Activated B cell treated with CpG ODN at 0.5 μM for 24 hours (primary cell): ENCODE measurements at regions of chrX and their contacts with region 1.

Region 1: GRCh38 chrX:50075630-50076339 is 125.0 kb downstream of the AKAP4 start:
- DNase-seq: no peak
- ATAC-seq: peak; percentile 40
- H3K4me3 Mint-ChIP-seq: peak overlapping the region; percentile 25
- H3K27ac Mint-ChIP-seq: peak overlapping the region; percentile 77
- H3K4me1 Mint-ChIP-seq: peaks cover 29% of the 10 kb centered on the region
- H3K27me3 Mint-ChIP-seq: no peaks in the 10 kb centered on the region
- CTCF ChIP-seq: no peak

Region 2: GRCh38 chrX:50036426-50036825 is 39.4 kb before region 1 on chrX:
- CTCF ChIA-PET with region 1: no interaction called
- POLR2A ChIA-PET with region 1: no interaction called
- intact Hi-C with region 1: no loop called
- DNase-seq: no peak
- ATAC-seq: no peak
- H3K4me3 Mint-ChIP-seq: no peak overlapping the region
- H3K27ac Mint-ChIP-seq: no peak overlapping the region
- H3K4me1 Mint-ChIP-seq: no peaks in the 10 kb centered on the region
- H3K27me3 Mint-ChIP-seq: no peaks in the 10 kb centered on the region
- CTCF ChIP-seq: no peak

Region 3: DNA sequence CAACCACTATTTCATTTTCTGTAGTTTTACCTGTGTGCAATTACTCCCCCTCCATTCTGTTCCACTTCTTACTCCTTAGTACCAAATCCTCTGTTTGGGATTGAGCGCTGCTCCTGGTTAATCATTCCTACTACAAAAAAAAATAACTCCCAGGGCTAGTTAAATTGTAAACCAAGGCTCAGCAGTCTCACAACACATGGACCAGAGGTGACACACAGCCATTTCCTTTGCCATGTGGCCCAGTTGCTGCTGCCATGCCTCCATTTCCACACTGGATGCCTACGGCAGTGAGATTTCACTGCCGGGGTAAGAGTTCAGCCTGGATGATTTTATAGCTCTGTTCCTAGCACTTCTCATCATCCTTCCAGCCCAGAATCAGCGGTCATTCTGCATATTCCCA is 17.8 kb after region 1 on chrX:
- CTCF ChIA-PET with region 1: no interaction called
- POLR2A ChIA-PET with region 1: no interaction called
- intact Hi-C with region 1: no loop called
- DNase-seq: no peak
- ATAC-seq: no peak
- H3K4me3 Mint-ChIP-seq: no peak overlapping the region
- H3K27ac Mint-ChIP-seq: no peak overlapping the region
- H3K4me1 Mint-ChIP-seq: peaks cover 6% of the 10 kb centered on the region
- H3K27me3 Mint-ChIP-seq: no peaks in the 10 kb centered on the region
- CTCF ChIP-seq: no peak

Region 4: DNA sequence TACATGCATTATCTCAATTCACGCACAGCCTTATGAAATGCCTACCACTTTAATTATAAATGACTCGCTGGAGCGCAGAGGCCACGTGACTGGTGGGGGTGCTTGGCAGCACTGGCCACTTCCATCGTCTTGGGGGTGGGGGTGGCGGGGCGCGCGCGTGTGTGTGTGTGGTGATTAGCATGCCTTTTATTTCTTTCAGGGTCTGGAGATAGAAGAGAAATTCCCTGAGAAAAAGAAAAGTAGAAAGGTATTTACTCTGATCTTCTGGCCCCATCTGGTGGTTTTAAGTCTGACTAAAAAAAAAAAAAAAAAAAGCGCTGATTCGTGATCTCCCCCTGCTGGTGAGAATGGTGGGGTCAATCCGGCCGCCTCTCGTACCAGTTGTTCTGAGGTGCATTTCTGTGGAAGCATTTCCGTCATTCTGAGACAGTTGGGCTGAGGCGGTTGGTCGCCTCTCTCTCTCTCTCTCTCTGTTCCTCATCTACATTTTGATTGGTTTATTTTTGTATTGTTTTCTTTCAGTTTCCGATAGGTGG is 128.6 kb after region 1 on chrX and contains the start of gene CCNB3:
- CTCF ChIA-PET with region 1: no interaction called
- POLR2A ChIA-PET with region 1: no interaction called
- intact Hi-C with region 1: loop called (anchors 1 kb)
- DNase-seq: peak; percentile 30
- ATAC-seq: peak; percentile 98
- H3K4me3 Mint-ChIP-seq: peak within 1 kb of the TSS; percentile 85
- H3K27ac Mint-ChIP-seq: peak within 1 kb of the TSS; percentile 93
- H3K4me1 Mint-ChIP-seq: peaks cover 7% of the 10 kb centered on the region
- H3K27me3 Mint-ChIP-seq: no peaks in the 10 kb centered on the region
- CTCF ChIP-seq: no peak
- total RNA-seq, gene CCNB3: 0.37 and 1.4 TPM in 2 replicates